Heart right ventricle (tissue), 16 donors: ENCODE measurements at regions of chr2 and their contacts with region 1.

Region 1: DNA sequence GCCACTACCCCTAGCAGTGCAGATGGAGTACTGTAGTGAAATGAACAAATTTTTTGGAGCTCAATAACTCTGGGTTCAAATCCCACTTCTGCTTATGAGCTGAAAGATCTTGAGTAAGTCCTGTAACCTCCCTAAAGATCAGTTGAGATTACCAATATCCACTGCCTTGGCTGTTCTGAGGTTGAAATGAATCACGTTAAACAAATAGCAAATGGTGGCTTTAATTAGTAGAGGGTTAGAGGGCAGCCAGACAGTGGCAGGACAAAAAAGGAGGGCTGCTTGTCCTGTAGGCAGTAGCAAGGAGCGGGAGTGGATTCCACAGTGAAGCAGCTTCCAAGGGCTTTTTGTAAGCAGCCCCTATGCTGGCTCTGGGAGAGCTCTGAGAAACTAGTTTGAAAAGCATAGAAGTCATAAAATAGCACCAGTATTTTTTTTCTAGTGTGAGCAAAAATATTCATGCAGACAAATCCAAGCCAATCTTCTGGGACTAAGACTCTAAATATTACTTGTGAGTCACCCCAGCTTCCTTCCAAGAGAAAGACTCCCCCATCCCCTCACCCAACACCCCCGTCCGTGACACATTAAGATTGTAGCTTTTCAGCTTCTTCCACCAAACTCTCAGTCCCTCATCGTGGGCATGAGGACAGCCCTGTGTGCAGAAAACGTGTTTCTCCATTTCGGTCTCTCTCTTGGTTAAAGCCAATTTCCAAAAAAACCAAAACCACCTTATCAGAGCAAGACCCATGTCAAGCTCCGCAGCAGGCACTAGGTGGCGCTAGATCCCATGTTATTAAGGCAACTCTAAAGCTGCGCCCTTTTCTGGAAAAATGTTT is 123.5 kb upstream of the LGALSL start:
- DNase-seq: peak; percentile 71 to 86
- ATAC-seq: peak; percentile 58 to 82 (median 74)
- H3K4me3 ChIP-seq: peak overlapping the region in 6 of 10 donors; percentile 16 to 32 (median 24)
- H3K27ac ChIP-seq: peak overlapping the region; percentile 58 to 85 (median 77)
- H3K4me1 ChIP-seq: peaks cover 15 to 49% (median 40%) of the 10 kb centered on the region in 9 donors
- H3K27me3 ChIP-seq: no peaks in the 10 kb centered on the region
- CTCF ChIP-seq: peak; percentile 86 to 95 (median 90)

Region 2: DNA sequence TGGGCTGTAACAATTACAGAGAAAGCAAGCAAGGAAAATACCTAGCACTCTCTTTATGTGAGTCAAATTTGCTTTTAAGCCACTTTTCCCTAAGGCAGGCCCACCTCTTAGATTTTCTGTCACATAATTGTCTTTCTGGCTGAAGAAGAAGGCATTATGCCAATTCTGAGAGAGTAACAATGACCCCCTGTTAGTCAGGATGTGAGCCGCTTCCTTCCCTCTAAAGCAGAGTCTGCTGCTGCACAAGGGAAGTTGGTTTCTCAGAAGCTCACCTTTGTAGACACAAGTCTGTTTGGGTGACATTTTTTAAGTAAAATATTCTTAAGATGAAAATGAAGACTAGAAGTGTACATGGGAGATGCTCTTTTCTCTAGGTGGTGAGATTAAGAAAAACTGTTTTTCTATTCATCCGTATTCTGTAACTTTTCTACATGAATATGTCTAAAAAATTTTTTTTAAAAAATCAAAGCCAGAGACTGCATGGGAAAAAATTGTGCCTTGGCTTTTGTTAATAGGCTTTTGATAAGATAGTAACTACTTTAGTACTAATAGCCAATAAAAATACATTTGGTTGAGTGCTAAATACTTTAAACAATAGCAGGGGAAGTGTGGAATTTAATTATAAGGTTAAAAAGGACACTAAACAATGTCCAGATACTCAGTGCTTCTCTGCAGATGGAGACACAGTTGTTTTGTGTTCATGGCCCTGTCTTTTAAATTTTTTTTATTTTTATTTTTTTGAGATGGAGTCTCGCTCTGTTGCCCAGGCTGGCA is 277.8 kb before region 1 on chr2:
- intact Hi-C with region 1: loop called in 8 of 10 experiments (anchors 1 to 5 kb)
- DNase-seq: peak in 1 of 2 donors; percentile 45
- ATAC-seq: peak; percentile 72 to 94 (median 81)
- H3K4me3 ChIP-seq: no peak overlapping the region
- H3K27ac ChIP-seq: peak overlapping the region; percentile 38 to 86 (median 70)
- H3K4me1 ChIP-seq: peaks cover 0 to 40% (median 15%) of the 10 kb centered on the region in 9 donors
- H3K27me3 ChIP-seq: no peaks in the 10 kb centered on the region
- CTCF ChIP-seq: no peak

Region 3: DNA sequence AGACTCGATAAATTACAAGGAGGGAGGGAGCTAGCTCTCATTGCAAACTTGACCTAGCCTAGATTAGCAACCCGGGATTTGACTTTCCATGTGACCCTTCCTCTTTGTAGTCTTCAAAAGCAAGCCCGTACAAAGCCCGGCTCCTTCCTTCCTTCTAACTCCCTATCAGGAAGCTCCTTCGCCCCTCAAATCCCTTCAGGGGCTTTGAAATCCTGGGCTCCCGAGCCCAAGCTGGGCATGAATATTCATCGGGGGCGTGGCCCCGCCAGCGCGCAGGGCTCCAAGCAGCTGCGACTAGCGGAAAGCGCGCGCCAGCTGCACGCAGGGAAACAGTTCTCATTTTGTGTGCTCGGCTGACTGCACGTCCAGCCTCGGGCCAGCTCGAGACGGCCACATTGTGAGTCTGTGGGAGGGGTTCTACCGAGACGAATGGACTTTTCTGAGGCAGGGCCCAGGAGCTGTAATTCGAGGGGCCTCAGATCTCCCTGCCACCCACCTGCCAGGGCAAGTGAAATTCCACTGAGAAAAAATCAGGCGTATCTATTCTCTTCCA is 102.3 kb before region 1 on chr2:
- intact Hi-C with region 1: loop called in 1 of 10 experiments (anchors 5 kb)
- DNase-seq: peak; percentile 86 to 87
- ATAC-seq: peak; percentile 96 to 99 (median 98)
- H3K4me3 ChIP-seq: peak overlapping the region in 9 of 10 donors; percentile 30 to 59 (median 56)
- H3K27ac ChIP-seq: peak overlapping the region; percentile 41 to 93 (median 78)
- H3K4me1 ChIP-seq: peaks cover 3 to 35% (median 16%) of the 10 kb centered on the region in 9 donors
- H3K27me3 ChIP-seq: no peaks in the 10 kb centered on the region
- CTCF ChIP-seq: peak in 2 of 9 donors; percentile 4 to 18

Region 4: DNA sequence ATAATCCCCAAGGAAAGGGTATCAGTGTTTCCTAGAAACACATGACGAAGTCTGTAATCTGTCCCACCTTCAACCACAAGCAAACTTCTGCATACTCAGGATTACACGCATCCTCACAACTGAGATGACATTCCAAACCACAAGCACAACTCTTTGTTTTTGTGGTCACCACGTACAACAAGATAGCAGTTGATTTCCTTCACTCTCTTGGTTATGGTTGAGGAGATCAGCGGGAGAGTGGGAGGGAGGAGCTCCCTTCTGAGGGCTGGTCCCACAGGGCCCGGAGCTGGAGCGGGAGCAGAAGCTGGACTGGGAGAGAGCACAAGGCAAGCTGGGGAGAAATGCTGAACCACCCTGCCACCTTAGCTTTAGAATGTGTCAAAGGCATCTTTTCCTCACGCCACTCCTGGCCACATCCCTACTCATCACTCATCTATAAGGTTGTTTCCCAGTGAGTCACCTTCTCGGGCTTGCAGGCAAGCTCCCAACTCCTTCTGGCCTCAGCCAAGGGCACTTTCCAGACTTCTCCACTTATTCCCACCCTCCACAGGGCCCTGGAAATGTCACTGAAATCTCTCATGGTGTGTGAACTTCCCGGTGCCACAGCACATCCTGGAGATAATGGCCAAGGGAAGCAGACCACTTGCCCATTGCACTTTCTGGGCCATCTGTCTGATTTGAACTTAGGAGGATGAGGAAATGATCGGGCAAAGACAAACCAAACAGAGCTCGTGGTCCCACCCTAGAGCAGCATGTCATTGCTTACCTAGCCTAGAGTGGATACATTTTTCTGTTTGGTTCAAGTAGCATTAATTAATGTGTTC is 24.6 kb after region 1 on chr2:
- intact Hi-C with region 1: no loop called
- DNase-seq: no peak
- ATAC-seq: no peak
- H3K4me3 ChIP-seq: no peak overlapping the region
- H3K27ac ChIP-seq: no peak overlapping the region
- H3K4me1 ChIP-seq: peaks cover 0 to 15% (median 3%) of the 10 kb centered on the region in 9 donors
- H3K27me3 ChIP-seq: peaks cover 0 to 38% (median 4%) of the 10 kb centered on the region in 7 donors
- CTCF ChIP-seq: no peak

Region 5: GRCh38 chr2:64488050-64488974 is 157.8 kb after region 1 on chr2:
- intact Hi-C with region 1: loop called (anchors 1 to 5 kb)
- DNase-seq: peak; percentile 63 to 72
- ATAC-seq: peak; percentile 34 to 87 (median 76)
- H3K4me3 ChIP-seq: no peak overlapping the region
- H3K27ac ChIP-seq: no peak overlapping the region
- H3K4me1 ChIP-seq: peaks cover 4 to 35% (median 21%) of the 10 kb centered on the region in 9 donors
- H3K27me3 ChIP-seq: peaks cover 0 to 6% (median 0%) of the 10 kb centered on the region in 7 donors
- CTCF ChIP-seq: peak; percentile 94 to 98 (median 97)

Region 6: DNA sequence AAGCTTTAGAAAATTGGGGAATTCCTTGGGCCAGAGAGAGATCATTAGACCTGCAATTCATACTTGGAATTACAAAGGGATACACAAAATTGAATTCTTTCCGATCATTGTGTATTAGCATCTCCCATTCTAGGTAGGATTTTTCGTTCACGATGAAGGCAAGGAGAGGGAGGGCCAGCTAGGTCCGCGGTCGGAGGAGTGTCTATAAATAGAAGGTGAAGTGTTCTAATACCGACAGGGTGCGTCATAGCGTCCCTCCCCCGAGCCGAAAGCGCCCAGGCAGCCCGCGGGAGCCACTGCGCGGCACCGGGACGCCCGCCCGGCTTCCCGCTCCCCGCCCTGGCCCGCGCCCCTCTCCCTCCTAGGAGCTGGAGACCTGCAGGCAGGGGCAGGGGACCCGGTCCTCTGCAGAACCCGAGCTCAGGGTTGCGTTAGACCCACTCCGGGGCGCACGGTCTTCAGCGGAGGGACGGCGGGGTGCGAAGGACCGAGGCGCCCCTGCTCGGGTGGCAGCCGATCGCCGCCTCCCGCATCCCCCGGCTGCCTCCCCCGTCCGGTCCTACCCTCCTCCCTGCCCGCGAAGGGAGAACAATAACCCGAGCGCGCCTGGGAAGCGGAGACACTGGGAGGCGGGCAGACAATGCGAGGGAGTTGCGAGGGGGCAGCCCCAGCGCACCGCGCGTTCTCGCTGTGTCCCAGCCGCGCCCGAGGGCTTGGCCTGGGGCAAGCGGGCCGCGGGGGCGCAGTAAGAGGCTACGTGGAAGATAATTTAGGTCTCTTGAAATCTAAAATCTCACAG is 437.4 kb after region 1 on chr2:
- intact Hi-C with region 1: loop called in 1 of 10 experiments (anchors 2 kb)
- DNase-seq: peak; percentile 89 to 94
- ATAC-seq: peak; percentile 95 to 99 (median 96)
- H3K4me3 ChIP-seq: peak overlapping the region; percentile 26 to 75 (median 70)
- H3K27ac ChIP-seq: peak overlapping the region; percentile 95 to 99 (median 98)
- H3K4me1 ChIP-seq: peaks cover 0 to 36% (median 17%) of the 10 kb centered on the region in 9 donors
- H3K27me3 ChIP-seq: no peaks in the 10 kb centered on the region
- CTCF ChIP-seq: peak in 2 of 9 donors; percentile 10 to 35